ENCODE measurements at regions of chr1 and their contacts with region 1.

Region 1: GRCh38 chr1:50977575-50978143 is 7.6 kb downstream of the CDKN2C start:
- DNase-seq: no peak
- H3K4me3 Mint-ChIP-seq: peak overlapping the region; percentile 87
- H3K27ac Mint-ChIP-seq: peak overlapping the region; percentile 48
- H3K4me1 Mint-ChIP-seq: peaks cover 31% of the 10 kb centered on the region
- H3K27me3 Mint-ChIP-seq: peaks cover 37% of the 10 kb centered on the region

Region 2: DNA sequence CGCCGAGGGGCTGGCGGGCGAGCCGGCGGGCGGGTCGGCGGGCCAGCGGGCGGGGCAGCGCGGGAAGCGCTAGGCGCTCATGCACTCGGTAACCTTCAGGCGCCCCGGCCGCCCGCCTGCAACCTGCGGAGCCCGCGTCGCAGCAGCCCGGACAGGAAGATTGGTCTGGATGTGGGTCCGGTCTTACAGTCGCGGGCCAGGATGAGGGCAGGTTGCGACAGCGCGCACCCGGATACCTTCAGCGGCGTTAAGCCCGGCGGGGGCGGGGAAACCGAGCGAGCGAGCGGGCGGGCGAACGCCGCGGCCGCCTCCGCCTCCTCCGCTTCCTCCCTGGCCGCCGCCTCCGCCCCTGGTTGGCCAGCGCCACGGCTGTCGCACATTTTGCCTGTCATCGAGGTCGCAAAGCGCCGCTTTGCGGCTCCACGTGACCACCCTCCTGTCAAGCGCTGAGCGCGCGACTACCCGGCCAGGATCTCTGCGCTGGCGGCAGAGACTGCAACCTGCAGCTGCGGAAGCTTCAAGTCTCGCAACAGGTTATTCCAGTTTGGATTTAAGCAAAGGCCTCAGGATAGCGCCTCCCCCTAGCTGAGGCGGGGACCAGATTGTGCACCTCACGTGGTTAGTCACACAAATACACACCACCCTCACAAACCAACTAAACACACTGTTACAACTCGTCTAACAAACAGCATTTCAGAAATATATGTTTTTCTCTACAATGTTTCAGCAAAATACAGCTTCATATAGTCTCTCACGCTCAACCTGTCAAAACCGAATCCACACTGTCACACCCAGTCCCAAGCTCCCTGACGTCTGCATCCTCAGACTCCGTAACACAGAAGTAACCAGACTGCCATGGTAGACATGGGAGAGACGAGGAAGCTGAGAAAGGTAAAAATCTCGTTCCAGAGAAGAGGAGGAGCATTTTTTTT is 17.5 kb before region 1 on chr1 and contains the start of gene FAF1:
- intact Hi-C with region 1: loop called (anchors 1 kb)
- DNase-seq: peak; percentile 98
- H3K4me3 Mint-ChIP-seq: peak within 1 kb of the TSS; percentile 94
- H3K27ac Mint-ChIP-seq: peak within 1 kb of the TSS; percentile 98
- H3K4me1 Mint-ChIP-seq: peaks cover 23% of the 10 kb centered on the region
- H3K27me3 Mint-ChIP-seq: peaks cover 8% of the 10 kb centered on the region
- total RNA-seq, gene FAF1: 58.8 and 62.0 TPM in 2 replicates

Measured in activated T-helper 1 cell treated with anti-CD3 and anti-CD28 coated beads, Interleukin-12 subunit alpha, Interleukin-12 subunit beta, Interleukin-2, Interleukin-4 antibody, amounts not matched to agents 30 ng/mL and 10 ng/mL and 1 ng/mL, durations not matched to agents 14 hours and 24 hours and 36 hours (primary cell).